OCI-LY7 (cell line): ENCODE measurements at regions of chr4 and their contacts with region 1.

Region 1: GRCh38 chr4:77163636-77164035 is 6.6 kb downstream of the CCNG2 start:
- DNase-seq: no peak
- H3K4me3 ChIP-seq: no peak overlapping the region
- H3K27ac ChIP-seq: no peak overlapping the region
- H3K4me1 ChIP-seq: peaks cover 13% of the 10 kb centered on the region
- CTCF ChIP-seq: no peak

Region 2: GRCh38 chr4:77193511-77194102 is 30.0 kb after region 1 on chr4:
- CTCF ChIA-PET with region 1: no interaction called
- POLR2A ChIA-PET with region 1: interaction called, 11 read pairs
- intact Hi-C with region 1: no loop called
- DNase-seq: peak; percentile 89
- H3K4me3 ChIP-seq: peak overlapping the region; percentile 46
- H3K27ac ChIP-seq: peak overlapping the region; percentile 18
- H3K4me1 ChIP-seq: peaks cover 13% of the 10 kb centered on the region
- CTCF ChIP-seq: no peak